Endothelial cell of umbilical vein (primary cell): ENCODE measurements at regions of chr7 and their contacts with region 1.

Region 1: DNA sequence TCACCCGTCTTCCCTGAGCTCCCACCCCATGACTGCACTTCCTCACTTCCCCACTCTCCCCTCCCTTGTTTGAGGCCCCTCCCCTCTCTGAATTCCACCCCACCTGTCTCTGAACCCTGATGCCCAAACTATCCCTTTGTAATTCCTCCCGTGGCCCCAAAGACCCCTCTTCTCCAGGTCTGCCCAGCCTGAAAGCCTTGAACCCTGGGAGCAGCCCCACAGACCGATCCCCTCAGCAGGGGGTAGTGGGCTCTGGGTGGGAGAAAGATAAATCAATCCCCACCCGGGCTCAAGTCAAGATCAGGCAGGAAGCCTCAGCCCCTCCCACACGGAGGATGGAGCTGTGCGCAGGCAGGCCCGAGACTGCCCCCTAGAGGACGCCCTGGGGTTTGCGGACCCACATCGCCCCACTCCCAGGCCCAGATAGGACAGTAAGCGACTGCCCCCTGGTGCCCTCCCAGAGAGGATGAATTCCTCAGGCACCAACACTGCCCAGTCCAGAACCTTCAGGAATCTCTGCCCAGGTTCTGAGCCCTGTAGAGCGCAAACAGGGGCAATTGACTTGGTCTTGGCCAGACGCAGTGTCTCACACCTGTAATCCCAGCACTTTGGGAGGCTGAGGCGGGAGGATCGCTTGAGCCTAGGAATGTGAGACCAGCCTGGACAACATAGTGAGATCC is 11.7 kb downstream of the HSPB1 start:
- DNase-seq: peak; percentile 93
- H3K4me3 ChIP-seq: no peak overlapping the region
- H3K27ac ChIP-seq: no peak overlapping the region
- H3K4me1 ChIP-seq: peaks cover 14% of the 10 kb centered on the region
- H3K27me3 ChIP-seq: no peaks in the 10 kb centered on the region
- CTCF ChIP-seq: peak; percentile 100
- POLR2A ChIP-seq: no peak

Region 2: GRCh38 chr7:76179686-76180085 is 134.5 kb before region 1 on chr7:
- CTCF ChIA-PET with region 1: interaction called, 100 read pairs
- POLR2A ChIA-PET with region 1: no interaction called
- dilution Hi-C with region 1: no loop called
- intact Hi-C with region 1: loop called (anchors 1 kb)
- DNase-seq: no peak
- H3K4me3 ChIP-seq: no peak overlapping the region
- H3K27ac ChIP-seq: no peak overlapping the region
- H3K4me1 ChIP-seq: no peaks in the 10 kb centered on the region
- H3K27me3 ChIP-seq: no peaks in the 10 kb centered on the region
- CTCF ChIP-seq: no peak
- POLR2A ChIP-seq: no peak

Region 3: GRCh38 chr7:76262683-76263402 is 51.3 kb before region 1 on chr7:
- CTCF ChIA-PET with region 1: interaction called, 61 read pairs
- POLR2A ChIA-PET with region 1: no interaction called
- dilution Hi-C with region 1: no loop called
- intact Hi-C with region 1: loop called (anchors 1 kb)
- DNase-seq: peak; percentile 48
- H3K4me3 ChIP-seq: no peak overlapping the region
- H3K27ac ChIP-seq: no peak overlapping the region
- H3K4me1 ChIP-seq: peaks cover 4% of the 10 kb centered on the region
- H3K27me3 ChIP-seq: peaks cover 12 to 14% of the 10 kb centered on the region in 2 experiments
- CTCF ChIP-seq: peak; percentile 70 to 80
- POLR2A ChIP-seq: no peak

Region 4: GRCh38 chr7:76282344-76283253 is 31.6 kb before region 1 on chr7:
- CTCF ChIA-PET with region 1: interaction called, 18 read pairs
- POLR2A ChIA-PET with region 1: no interaction called
- dilution Hi-C with region 1: no loop called
- intact Hi-C with region 1: no loop called
- DNase-seq: no peak
- H3K4me3 ChIP-seq: peak overlapping the region in 2 of 3 experiments; percentile 29 to 42
- H3K27ac ChIP-seq: no peak overlapping the region
- H3K4me1 ChIP-seq: no peaks in the 10 kb centered on the region
- H3K27me3 ChIP-seq: peaks cover 14 to 23% of the 10 kb centered on the region in 2 experiments
- CTCF ChIP-seq: no peak
- POLR2A ChIP-seq: no peak

Region 5: DNA sequence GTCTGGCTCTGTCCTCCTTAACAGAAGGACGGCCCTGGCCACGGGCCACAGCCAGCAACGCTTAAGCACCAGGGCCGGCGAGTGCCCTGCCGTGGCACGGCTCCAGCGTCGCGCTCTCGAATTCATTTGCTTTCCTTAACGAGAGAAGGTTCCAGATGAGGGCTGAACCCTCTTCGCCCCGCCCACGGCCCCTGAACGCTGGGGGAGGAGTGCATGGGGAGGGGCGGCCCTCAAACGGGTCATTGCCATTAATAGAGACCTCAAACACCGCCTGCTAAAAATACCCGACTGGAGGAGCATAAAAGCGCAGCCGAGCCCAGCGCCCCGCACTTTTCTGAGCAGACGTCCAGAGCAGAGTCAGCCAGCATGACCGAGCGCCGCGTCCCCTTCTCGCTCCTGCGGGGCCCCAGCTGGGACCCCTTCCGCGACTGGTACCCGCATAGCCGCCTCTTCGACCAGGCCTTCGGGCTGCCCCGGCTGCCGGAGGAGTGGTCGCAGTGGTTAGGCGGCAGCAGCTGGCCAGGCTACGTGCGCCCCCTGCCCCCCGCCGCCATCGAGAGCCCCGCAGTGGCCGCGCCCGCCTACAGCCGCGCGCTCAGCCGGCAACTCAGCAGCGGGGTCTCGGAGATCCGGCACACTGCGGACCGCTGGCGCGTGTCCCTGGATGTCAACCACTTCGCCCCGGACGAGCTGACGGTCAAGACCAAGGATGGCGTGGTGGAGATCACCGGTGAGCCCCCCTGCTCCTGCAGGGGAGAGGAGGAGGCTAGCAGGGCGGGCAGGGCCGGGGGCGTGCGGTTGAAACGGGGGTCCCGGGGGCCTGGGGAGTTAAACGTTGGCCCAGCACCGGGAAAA is 11.6 kb before region 1 on chr7 and contains the start of gene HSPB1:
- CTCF ChIA-PET with region 1: interaction called, 11 read pairs
- POLR2A ChIA-PET with region 1: interaction called, 5 read pairs
- dilution Hi-C with region 1: no loop called
- intact Hi-C with region 1: loop called (anchors 1 kb)
- DNase-seq: peak; percentile 98
- H3K4me3 ChIP-seq: peak within 1 kb of the TSS; percentile 79 to 97 (median 84)
- H3K27ac ChIP-seq: peak within 1 kb of the TSS; percentile 73
- H3K4me1 ChIP-seq: peaks cover 19% of the 10 kb centered on the region
- H3K27me3 ChIP-seq: no peaks in the 10 kb centered on the region
- CTCF ChIP-seq: no peak
- POLR2A ChIP-seq: peak; percentile 99
- total RNA-seq, gene HSPB1: 1,711 and 1,748 TPM in 2 replicates

Region 6: DNA sequence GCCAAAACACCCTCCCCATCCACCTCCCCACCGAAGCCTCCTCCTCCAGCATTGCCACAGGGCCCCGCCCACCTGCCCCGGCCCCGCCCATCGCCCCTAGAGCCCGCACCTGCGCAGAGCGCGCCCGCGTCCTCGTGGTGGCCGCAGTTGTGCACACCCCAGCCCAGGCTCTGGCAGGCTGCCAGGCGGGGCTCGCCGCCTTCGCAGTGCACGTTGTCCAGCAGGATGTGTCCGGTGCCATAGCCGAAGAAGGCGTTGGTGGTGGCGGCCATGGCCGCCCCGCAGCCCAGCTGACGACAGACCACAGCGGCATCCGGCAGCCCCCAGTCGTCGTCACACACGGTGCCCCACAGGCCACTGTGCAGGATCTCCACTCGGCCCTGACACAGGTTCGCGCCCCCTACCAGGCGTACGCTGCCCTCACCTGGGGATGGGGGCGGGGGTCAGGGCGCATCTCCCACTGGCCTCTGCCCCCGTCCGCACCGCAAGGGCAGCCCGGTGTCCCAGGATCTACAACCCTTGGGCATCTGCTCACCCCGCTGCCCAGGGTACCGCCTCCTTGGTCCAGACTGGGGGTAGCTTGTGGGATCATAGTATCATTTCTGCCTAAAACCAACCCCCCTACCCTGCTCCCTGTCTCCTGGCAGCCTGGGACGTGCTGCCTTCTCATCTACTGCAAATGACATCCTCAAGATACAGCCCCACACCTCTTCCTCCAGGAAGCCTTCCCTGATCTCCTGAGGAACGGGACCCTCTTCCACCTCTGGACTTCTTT is 83.4 kb after region 1 on chr7:
- CTCF ChIA-PET with region 1: no interaction called
- POLR2A ChIA-PET with region 1: no interaction called
- dilution Hi-C with region 1: no loop called
- intact Hi-C with region 1: no loop called
- DNase-seq: peak; percentile 75
- H3K4me3 ChIP-seq: peak overlapping the region in 1 of 3 experiments; percentile 29
- H3K27ac ChIP-seq: no peak overlapping the region
- H3K4me1 ChIP-seq: peaks cover 4% of the 10 kb centered on the region
- H3K27me3 ChIP-seq: no peaks in the 10 kb centered on the region
- CTCF ChIP-seq: no peak
- POLR2A ChIP-seq: peak; percentile 28